ENCODE measurements at regions of chr17 and their contacts with region 1.

Region 1: DNA sequence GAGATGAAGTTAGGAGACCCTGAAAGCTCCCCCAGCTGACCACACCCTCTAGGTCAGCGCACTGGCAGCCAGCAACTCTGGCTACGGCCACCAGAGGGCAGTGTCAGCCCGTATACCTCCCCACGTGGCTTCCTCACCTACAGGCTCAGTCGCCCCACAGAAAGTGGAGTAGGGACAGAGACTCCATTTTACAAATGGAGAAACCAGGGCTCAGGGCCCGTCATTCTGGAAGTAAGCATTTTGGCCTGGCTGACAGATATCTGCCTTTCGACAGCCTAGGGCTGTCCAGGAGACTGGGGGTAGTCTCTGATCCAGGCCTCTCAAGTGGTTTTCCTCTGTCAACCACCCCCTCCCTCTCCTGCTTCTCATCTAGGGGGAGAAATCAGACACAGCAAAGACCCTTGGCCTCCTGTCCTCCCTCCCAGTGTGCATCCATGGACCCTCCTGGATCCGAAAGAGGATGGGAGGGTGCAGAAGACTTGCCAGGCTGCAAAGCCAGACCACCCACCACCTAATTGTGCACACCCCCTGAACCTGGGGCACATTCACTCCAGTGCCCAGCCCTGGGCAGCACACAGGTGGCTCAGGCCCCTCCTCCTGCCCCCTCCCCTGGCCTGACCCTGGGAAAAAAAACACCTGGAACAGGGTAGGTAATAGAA is 3.8 kb upstream of the HAP1 start:
- DNase-seq: peak; percentile 75 to 80
- H3K4me3 ChIP-seq: no peak overlapping the region
- H3K27ac ChIP-seq: peak overlapping the region in 2 of 3 donors; percentile 13 to 60
- H3K4me1 ChIP-seq: peaks cover 27 to 55% of the 10 kb centered on the region in 2 donors
- H3K27me3 ChIP-seq: no peaks in the 10 kb centered on the region
- CTCF ChIP-seq: peak; percentile 96 to 98 (median 97)
- POLR2A ChIP-seq: no peak

Region 2: GRCh38 chr17:41801374-41802271 is 63.4 kb after region 1 on chr17:
- intact Hi-C with region 1: loop called (anchors 2 kb)
- DNase-seq: peak; percentile 94
- H3K4me3 ChIP-seq: no peak overlapping the region
- H3K27ac ChIP-seq: peak overlapping the region; percentile 89 to 93 (median 93)
- H3K4me1 ChIP-seq: peaks cover 14 to 21% of the 10 kb centered on the region in 2 donors
- H3K27me3 ChIP-seq: no peaks in the 10 kb centered on the region
- CTCF ChIP-seq: peak; percentile 91 to 100 (median 97)
- POLR2A ChIP-seq: peak in 1 of 2 donors; percentile 33

Region 3: DNA sequence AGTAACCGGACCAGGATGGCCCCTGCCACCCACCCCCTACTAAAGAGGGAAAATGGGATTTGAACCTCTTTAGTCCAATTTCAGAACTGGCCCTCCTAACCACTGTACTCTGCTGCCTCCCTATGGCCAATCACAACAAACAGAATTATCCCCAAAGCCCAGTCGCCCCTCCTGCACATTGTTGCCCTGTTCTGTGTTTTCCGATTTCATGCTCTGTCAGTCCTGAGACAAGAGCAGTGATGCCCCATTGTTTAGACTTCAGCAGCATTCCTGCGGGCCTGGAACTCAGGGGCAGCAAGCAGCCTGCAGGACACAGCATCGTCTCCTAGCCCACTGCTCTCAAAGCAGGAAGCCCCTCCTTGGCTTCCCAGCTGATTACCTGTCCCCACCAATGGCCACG is 147.5 kb after region 1 on chr17:
- intact Hi-C with region 1: loop called (anchors 10 kb)
- DNase-seq: no peak
- H3K4me3 ChIP-seq: no peak overlapping the region
- H3K27ac ChIP-seq: no peak overlapping the region
- H3K4me1 ChIP-seq: peaks cover 8% of the 10 kb centered on the region in 2 donors
- H3K27me3 ChIP-seq: no peaks in the 10 kb centered on the region
- CTCF ChIP-seq: peak in 4 of 6 experiments; percentile 29 to 56 (median 42)
- POLR2A ChIP-seq: no peak

Region 4: DNA sequence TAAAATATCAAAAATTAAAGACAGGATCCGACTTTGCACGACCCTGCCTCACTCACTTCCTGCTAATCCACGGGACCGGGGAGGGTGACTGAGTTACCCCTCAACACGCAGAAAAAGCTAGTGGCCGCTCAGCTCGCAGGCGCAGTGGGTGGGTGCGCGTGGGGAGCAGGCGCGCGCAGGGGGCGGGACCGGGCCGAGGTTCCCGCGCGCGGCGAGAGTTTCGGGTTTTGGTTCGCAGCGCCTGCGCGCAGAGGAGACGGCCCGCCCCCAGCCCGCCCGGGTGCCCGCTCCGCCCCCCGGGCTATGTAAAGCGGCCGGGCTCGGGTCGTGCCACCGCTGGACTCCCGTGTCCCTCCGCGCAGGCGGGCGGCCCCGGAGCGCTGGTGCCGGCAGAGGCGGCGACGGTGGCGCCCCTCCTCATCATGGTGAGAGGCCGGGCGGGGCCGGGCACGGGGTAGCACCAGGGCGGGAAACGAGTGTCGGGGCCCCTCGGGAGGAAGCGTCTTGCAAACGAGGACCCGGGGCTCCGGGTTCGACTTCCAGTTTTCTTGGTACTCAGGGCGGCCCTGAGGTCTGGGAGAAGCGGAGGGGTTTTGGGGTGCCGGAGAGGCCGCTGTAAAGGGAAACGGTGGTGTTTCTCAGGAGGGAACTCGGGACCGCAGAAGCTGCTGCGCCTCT is 228.4 kb after region 1 on chr17 and contains the start of gene CNP:
- intact Hi-C with region 1: loop called (anchors 10 kb)
- DNase-seq: peak; percentile 94
- H3K4me3 ChIP-seq: peak within 1 kb of the TSS; percentile 46 to 90 (median 90)
- H3K27ac ChIP-seq: peak within 1 kb of the TSS; percentile 85 to 91 (median 87)
- H3K4me1 ChIP-seq: peaks cover 12 to 40% of the 10 kb centered on the region in 2 donors
- H3K27me3 ChIP-seq: no peaks in the 10 kb centered on the region
- CTCF ChIP-seq: peak in 1 of 6 experiments; percentile 28
- POLR2A ChIP-seq: peak in 1 of 2 donors; percentile 94
- total RNA-seq, gene CNP: 41.8 to 65.2 (median 53.8) TPM